ACHN (cell line): ENCODE measurements at regions of chr11 and their contacts with region 1.

Region 1: DNA sequence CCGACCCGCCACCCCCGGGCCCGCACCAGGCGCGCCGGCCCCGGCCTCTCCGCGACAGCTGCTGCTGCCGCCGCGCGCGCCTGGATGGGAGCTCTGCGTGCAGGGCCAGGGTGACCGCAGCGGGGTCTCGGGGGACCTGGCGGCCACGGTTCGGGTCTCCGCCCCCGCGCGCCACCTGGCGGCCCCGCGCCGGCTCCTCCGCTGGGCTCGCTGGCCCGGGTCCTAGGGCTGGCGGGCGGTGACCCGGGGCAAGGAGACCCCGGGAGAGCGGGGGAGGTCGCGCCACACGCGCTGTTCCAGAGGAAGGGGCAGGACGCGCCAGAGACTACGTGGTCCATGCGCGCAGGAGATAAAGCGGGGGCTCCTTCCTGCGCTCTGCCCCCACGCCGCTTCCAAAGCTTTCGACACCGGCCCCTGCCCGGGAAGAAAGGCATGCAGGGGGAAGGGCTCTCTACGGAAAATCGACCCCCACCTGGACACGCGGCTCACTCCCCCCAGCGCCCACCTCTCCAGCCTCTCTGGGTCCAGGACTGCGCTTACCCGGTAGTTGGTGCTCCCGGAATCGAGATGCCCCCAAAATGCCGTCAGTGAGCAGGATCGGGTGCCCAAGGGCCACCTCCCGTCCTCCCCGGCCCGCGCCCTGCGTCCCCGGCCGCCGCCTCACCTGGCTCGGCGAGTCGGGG is 475 bp downstream of the SHANK2 start:
- DNase-seq: peak; percentile 48

Region 2: GRCh38 chr11:71139516-71140205 is 112.2 kb before region 1 on chr11:
- in situ Hi-C with region 1: no loop called
- DNase-seq: no peak

Region 3: DNA sequence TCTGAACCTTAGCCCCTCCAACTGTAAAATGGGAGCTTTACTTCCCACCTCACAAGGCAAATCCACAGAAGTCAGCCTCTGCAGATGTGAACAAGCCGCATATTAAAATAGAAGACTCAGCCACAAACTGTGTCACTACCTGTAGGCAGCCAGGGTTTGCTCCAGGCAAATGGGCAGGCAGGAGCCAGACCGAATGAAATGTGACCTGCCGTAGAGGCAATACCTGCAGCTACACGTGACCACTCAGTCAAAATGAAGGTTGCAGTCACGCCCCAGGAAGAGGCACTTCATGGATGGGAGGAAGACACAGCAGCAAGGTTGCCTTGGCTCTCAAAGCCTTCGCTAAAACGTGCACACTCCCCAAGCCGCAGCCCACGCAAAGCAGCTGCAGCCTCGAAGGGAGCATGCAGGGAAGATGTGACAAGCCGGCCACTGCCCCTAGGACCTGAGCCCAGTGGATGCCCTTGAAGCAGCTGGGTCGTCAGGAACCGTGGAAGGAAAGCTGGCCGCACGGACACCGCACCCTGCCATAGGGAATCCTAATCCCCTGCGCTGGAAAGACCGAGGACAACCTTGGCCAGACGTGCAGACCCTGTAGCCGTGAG is 52.6 kb before region 1 on chr11:
- in situ Hi-C with region 1: loop called (anchors 10 kb)
- DNase-seq: no peak